HAP-1 (cell line): ENCODE measurements at regions of chr9 and their contacts with region 1.

Region 1: GRCh38 chr9:20319641-20320337 is 302.5 kb downstream of the MLLT3 start:
- DNase-seq: peak; percentile 88 to 100
- H3K4me3 ChIP-seq: no peak overlapping the region
- H3K4me1 ChIP-seq: peaks cover 31% of the 10 kb centered on the region
- H3K27me3 ChIP-seq: no peaks in the 10 kb centered on the region

Region 2: GRCh38 chr9:20209391-20210340 is 110.1 kb before region 1 on chr9:
- in situ Hi-C with region 1: loop called (anchors 25 kb)
- DNase-seq: no peak
- H3K4me3 ChIP-seq: no peak overlapping the region
- H3K4me1 ChIP-seq: no peaks in the 10 kb centered on the region
- H3K27me3 ChIP-seq: no peaks in the 10 kb centered on the region